Calu3 (cell line): ENCODE measurements at regions of chr9 and their contacts with region 1.

Region 1: DNA sequence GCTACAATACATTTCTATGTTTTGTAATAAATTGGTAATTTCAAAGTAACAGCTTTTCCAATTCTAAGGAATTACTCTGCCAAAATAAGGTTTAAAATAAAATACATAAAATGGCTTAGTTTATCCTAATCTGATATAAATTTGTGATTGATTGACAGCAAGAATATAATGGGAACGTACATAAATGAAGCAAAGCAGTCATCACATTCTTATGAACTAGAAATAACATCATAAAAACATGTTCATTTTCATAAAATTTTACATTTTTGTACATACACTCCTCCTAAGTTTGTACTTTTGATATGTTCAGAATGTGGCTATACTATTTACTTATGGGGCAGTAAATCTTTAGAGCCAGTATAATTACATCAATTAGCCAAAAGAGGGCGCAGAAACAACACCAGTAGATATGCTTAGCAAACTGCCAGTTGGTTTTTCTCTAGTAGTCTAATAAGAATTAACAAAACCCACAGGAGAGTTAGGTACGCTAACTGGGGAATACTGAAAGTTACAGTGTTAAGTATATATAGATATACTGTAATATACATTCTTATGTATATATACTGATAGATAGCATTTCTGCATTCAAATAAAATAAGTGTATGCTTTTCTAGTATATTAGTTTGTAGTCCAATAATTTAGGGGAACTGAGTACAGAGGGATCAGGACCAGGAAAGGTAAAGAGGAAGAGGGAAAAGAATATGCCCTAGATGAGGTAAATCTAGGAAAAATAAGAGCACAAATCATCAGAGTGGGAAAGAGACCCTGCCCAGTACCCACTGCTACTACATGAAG is 76.8 kb downstream of the ZDHHC21 start:
- DNase-seq: peak; percentile 2
- H3K4me3 Mint-ChIP-seq: no peak overlapping the region
- H3K27ac Mint-ChIP-seq: no peak overlapping the region
- H3K4me1 Mint-ChIP-seq: no peaks in the 10 kb centered on the region
- H3K27me3 Mint-ChIP-seq: no peaks in the 10 kb centered on the region
- CTCF ChIP-seq: peak; percentile 21

Region 2: GRCh38 chr9:14466429-14466818 is 150.0 kb before region 1 on chr9:
- CTCF ChIA-PET with region 1: no interaction called
- intact Hi-C with region 1: loop called (anchors 10 kb)
- DNase-seq: no peak
- H3K4me3 Mint-ChIP-seq: no peak overlapping the region
- H3K27ac Mint-ChIP-seq: no peak overlapping the region
- H3K4me1 Mint-ChIP-seq: peaks cover 32% of the 10 kb centered on the region
- H3K27me3 Mint-ChIP-seq: peaks cover 35% of the 10 kb centered on the region
- CTCF ChIP-seq: no peak

Region 3: DNA sequence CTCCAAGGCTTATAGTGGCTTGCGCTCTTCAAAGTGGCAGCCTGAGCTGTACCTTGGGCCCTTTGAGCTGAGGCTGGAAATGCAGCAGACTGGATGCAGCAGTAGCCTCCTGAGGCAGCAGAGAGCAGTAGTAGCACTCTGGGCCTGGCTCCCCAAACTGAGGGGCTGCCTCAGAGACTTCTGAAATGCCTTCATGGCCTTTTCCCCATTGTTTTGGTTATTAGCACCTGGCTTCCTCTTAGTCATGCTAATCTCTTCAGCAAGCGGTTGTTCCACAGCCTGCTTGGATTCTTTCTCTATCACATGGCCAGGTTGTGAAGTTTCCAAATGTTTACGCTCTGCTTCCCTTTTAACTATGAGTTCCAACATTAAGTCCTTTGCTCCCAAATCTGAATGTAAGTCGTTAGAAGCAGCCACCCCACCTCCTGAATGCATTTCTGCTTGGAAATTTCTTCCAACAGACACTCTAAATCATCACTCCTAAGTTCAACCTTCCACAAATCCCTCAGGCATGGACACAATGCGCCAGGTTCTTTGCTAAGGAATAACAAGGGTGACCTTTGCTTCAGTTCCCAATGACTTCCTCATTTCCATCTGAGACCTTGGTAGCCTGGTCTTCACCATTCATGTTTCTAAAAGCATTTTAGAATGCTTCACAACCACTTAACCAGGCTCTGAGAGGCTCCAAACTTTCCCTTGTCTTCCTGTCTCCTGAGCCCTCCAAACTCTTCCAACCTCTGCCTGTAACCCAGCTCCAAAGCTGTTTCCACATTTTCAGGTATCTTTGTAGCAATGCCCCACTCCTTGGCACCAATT is 68.9 kb before region 1 on chr9:
- CTCF ChIA-PET with region 1: no interaction called
- intact Hi-C with region 1: no loop called
- DNase-seq: no peak
- H3K4me3 Mint-ChIP-seq: no peak overlapping the region
- H3K27ac Mint-ChIP-seq: no peak overlapping the region
- H3K4me1 Mint-ChIP-seq: no peaks in the 10 kb centered on the region
- H3K27me3 Mint-ChIP-seq: no peaks in the 10 kb centered on the region
- CTCF ChIP-seq: no peak

Region 4: DNA sequence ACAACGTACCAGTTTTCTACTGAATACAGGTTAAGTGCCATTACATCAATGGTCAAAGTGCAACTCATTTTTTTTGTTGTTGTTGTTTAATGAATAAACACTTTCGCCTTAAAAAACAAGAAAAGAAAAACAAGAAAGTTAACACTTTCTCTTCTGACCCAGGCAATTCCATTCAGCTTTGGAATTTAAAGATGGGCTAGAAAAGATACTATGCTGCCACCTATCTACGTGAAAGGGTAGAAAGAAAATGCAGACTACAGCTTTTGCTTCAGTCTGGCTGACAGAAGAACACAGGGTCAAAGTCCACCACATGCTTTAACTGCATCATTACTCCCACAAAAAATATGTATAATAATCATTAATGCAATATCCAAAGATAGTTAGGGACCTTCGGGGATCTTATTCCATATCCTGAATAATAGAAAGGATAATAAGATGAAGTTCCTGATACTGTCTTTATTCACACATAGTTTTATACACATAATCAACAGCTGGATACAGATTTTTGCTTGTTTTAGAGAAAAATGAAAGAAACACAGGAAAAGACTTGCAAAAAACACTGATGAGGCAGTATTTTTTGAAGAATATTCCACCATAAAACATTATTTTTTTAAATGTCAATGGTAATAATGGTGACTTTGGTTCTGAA is 36.5 kb after region 1 on chr9:
- CTCF ChIA-PET with region 1: no interaction called
- intact Hi-C with region 1: loop called (anchors 5 kb)
- DNase-seq: no peak
- H3K4me3 Mint-ChIP-seq: no peak overlapping the region
- H3K27ac Mint-ChIP-seq: no peak overlapping the region
- H3K4me1 Mint-ChIP-seq: no peaks in the 10 kb centered on the region
- H3K27me3 Mint-ChIP-seq: no peaks in the 10 kb centered on the region
- CTCF ChIP-seq: peak; percentile 20

Region 5: DNA sequence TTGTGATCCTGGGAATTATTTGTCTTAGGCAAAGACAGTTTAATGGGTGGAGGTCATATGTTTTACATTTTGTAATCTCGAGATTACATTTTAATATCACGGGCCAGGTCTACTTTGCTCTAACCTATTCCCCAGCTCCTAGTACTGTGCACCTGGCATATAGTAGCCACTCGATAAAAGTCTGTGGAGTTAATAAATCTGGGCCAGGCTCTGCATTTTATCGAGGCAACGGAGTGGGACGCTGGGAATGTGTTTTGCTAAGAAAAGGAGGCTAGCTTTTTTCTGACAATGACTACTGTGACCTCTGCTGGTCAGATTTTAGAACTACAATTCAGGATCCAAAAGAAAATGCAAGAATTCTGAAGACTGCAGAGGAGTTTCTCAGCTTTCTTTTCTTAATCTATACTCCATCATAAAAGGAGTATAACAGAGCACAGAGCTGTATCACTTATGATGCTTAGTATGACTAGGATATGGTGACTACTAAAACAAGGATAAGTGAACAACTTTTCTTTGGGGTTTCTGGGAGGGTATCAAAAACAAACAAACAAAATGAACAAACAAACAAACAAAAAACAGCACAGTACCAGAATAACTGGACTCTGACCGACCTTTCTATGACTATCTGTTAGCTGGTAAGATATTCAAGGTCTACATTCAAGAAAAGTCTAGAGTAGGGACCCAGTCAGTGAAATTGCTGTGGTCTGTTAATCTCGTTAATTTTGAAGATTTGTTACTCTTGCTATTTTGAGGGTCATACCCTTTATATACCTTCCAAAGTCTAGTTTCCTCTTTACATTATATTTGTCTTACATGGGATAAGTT is 152.2 kb after region 1 on chr9:
- CTCF ChIA-PET with region 1: no interaction called
- intact Hi-C with region 1: loop called (anchors 1 kb)
- DNase-seq: peak; percentile 34
- H3K4me3 Mint-ChIP-seq: no peak overlapping the region
- H3K27ac Mint-ChIP-seq: no peak overlapping the region
- H3K4me1 Mint-ChIP-seq: no peaks in the 10 kb centered on the region
- H3K27me3 Mint-ChIP-seq: peaks cover 10% of the 10 kb centered on the region
- CTCF ChIP-seq: peak; percentile 56